CD14-positive monocyte (primary cell): ENCODE measurements at regions of chr1 and their contacts with region 1.

Region 1: DNA sequence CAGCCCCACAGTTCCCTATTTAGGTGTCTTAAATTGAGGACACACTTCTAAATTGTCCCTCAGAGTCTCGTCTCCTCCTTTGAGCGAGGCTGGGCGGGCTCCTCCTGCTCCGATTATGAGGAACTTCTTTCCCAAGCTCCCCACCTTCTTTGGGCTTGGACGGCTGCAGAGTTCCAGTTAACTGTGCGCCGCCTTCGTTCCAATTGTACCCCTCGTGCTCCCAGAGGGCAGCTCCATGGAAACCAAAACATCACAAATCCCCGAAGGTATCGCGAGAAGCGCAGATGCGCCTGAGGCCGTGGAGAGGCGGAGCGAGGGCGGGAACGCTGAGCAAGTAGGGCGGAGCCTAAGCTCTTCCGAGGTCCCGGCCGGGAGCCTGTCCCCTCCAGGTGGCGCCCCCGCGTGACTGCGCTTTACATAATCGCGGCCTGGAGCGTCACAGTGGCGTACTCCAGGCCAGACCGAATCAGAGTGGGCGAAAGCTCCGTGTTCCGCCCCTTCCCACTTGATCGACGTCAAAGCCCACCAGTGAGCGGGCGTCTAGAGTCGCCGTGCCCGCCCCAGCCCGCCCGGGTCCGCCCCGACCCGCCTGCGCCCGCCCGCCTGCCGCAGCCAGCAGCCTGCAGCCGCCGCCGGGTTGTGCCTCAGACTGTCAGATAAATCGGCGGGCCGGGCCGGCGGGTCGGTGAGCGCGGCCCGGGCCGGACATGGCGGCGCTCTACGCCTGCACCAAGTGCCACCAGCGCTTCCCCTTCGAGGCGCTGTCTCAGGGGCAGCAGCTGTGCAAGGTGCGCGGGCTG is at the start of gene FAM76A:
- DNase-seq: peak; percentile 99 to 100 (median 100)
- H3K4me3 ChIP-seq: peak within 1 kb of the TSS; percentile 83 to 87 (median 84)
- H3K4me3 Mint-ChIP-seq: peak within 1 kb of the TSS; percentile 87 to 91
- H3K27ac ChIP-seq: peak within 1 kb of the TSS; percentile 69 to 88
- H3K27ac Mint-ChIP-seq: peak within 1 kb of the TSS; percentile 93 to 98 (median 96)
- H3K4me1 ChIP-seq: peaks cover 18 to 20% of the 10 kb centered on the region in 2 donors
- H3K4me1 Mint-ChIP-seq: peaks cover 19% of the 10 kb centered on the region
- H3K27me3 ChIP-seq: no peaks in the 10 kb centered on the region
- H3K27me3 Mint-ChIP-seq: peaks cover 0 to 2% (median 2%) of the 10 kb centered on the region in 3 donors
- CTCF ChIP-seq: peak; percentile 29
- polyA plus RNA-seq, gene FAM76A: 9.1 to 10.9 (median 10.3) TPM

Region 2: DNA sequence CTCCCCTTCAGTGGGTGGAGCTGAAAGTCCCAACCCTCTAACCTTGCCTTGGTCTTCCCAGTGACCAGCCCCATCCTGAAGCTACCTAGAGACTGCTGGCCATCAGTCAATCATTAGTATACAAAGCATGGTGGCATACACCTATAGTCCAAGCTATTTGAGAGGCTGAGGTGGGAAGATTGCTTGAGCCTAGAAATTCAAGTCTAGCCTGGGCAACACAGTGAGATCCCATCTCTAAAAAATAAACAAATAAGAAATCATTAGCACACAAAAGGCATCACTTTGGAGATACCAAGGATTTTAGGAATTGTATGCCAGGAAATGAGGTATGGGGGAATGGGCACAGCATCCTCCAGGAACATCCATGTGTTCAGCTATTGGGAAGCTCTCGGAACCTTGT is 49.2 kb before region 1 on chr1:
- intact Hi-C with region 1: no loop called
- DNase-seq: no peak
- H3K4me3 ChIP-seq: no peak overlapping the region
- H3K4me3 Mint-ChIP-seq: no peak overlapping the region
- H3K27ac ChIP-seq: no peak overlapping the region
- H3K27ac Mint-ChIP-seq: no peak overlapping the region
- H3K4me1 ChIP-seq: peaks cover 14 to 17% of the 10 kb centered on the region in 2 donors
- H3K4me1 Mint-ChIP-seq: peaks cover 13% of the 10 kb centered on the region
- H3K27me3 ChIP-seq: no peaks in the 10 kb centered on the region
- H3K27me3 Mint-ChIP-seq: peaks cover 0 to 3% (median 0%) of the 10 kb centered on the region in 3 donors
- CTCF ChIP-seq: no peak

Region 3: GRCh38 chr1:27772933-27773825 is 47.6 kb after region 1 on chr1 and contains the start of gene STX12:
- intact Hi-C with region 1: loop called (anchors 5 kb)
- DNase-seq: peak; percentile 96 to 99 (median 98)
- H3K4me3 ChIP-seq: peak within 1 kb of the TSS; percentile 71 to 99 (median 97)
- H3K4me3 Mint-ChIP-seq: peak within 1 kb of the TSS; percentile 91 to 95
- H3K27ac ChIP-seq: peak within 1 kb of the TSS; percentile 91 to 99
- H3K27ac Mint-ChIP-seq: peak within 1 kb of the TSS; percentile 95 to 98 (median 97)
- H3K4me1 ChIP-seq: peaks cover 26 to 36% of the 10 kb centered on the region in 2 donors
- H3K4me1 Mint-ChIP-seq: peaks cover 31% of the 10 kb centered on the region
- H3K27me3 ChIP-seq: no peaks in the 10 kb centered on the region
- H3K27me3 Mint-ChIP-seq: peaks cover 0 to 3% (median 0%) of the 10 kb centered on the region in 3 donors
- CTCF ChIP-seq: no peak
- polyA plus RNA-seq, gene STX12: 29.4 to 49.4 (median 36.2) TPM

Region 4: GRCh38 chr1:27968694-27969093 is 243.1 kb after region 1 on chr1:
- intact Hi-C with region 1: no loop called
- DNase-seq: peak in 2 of 3 donors; percentile 27 to 55
- H3K4me3 ChIP-seq: no peak overlapping the region
- H3K4me3 Mint-ChIP-seq: no peak overlapping the region
- H3K27ac ChIP-seq: no peak overlapping the region
- H3K27ac Mint-ChIP-seq: peak overlapping the region in 3 of 7 donors; percentile 68 to 86 (median 76)
- H3K4me1 ChIP-seq: peaks cover 2 to 6% of the 10 kb centered on the region in 2 donors
- H3K4me1 Mint-ChIP-seq: peaks cover 13% of the 10 kb centered on the region
- H3K27me3 ChIP-seq: no peaks in the 10 kb centered on the region
- H3K27me3 Mint-ChIP-seq: no peaks in the 10 kb centered on the region
- CTCF ChIP-seq: no peak